ENCODE measurements at regions of chr7 and their contacts with region 1.

Region 1: GRCh38 chr7:30225863-30226613 is 58.4 kb upstream of the ZNRF2 start:
- DNase-seq: peak; percentile 70 to 91
- ATAC-seq: peak; percentile 97
- H3K4me3 ChIP-seq: no peak overlapping the region
- H3K27ac ChIP-seq: peak overlapping the region; percentile 85 to 90 (median 88)
- H3K4me1 ChIP-seq: peaks cover 11 to 21% of the 10 kb centered on the region in 2 donors
- H3K27me3 ChIP-seq: no peaks in the 10 kb centered on the region
- CTCF ChIP-seq: no peak
- POLR2A ChIP-seq: no peak

Region 2: DNA sequence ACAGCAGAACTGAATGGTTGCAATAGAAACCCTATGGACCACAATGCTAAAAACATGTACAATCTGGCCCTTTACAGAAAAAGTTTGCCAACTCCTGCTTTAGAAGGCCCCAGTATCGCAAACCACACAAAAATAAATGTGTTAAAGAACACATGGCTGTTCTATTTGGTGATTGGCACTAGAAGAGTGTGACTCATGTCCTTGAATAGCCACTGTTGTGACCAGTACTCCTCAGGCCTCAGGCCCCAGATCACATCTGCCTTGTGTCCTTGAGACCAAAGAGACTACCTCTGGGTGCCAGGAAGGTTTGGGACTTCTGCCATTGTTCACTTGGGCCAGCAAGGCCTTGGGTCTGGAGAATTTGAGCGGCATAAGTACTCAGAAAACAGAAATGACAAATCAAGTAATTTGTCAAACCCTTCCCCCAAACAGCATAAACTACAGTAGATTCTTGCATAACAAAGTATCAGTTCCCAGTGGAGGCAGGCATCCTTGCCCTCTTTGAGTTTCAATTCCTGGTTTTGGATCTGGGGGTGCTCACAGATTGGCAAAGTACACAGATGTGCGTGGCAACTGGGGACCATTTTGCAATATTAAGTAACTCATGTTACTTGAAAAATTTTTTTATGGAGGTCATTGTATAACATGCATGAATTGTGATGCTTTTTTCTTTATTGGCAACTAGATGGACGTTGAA is 41.1 kb before region 1 on chr7:
- in situ Hi-C with region 1: loop called in 1 of 4 experiments (anchors 5 kb)
- intact Hi-C with region 1: loop called (anchors 2 kb)
- DNase-seq: peak; percentile 82 to 90
- ATAC-seq: peak; percentile 95 to 96
- H3K4me3 ChIP-seq: no peak overlapping the region
- H3K27ac ChIP-seq: peak overlapping the region; percentile 86 to 92 (median 90)
- H3K4me1 ChIP-seq: peaks cover 31 to 47% of the 10 kb centered on the region in 2 donors
- H3K27me3 ChIP-seq: no peaks in the 10 kb centered on the region
- CTCF ChIP-seq: no peak
- POLR2A ChIP-seq: no peak

Region 3: DNA sequence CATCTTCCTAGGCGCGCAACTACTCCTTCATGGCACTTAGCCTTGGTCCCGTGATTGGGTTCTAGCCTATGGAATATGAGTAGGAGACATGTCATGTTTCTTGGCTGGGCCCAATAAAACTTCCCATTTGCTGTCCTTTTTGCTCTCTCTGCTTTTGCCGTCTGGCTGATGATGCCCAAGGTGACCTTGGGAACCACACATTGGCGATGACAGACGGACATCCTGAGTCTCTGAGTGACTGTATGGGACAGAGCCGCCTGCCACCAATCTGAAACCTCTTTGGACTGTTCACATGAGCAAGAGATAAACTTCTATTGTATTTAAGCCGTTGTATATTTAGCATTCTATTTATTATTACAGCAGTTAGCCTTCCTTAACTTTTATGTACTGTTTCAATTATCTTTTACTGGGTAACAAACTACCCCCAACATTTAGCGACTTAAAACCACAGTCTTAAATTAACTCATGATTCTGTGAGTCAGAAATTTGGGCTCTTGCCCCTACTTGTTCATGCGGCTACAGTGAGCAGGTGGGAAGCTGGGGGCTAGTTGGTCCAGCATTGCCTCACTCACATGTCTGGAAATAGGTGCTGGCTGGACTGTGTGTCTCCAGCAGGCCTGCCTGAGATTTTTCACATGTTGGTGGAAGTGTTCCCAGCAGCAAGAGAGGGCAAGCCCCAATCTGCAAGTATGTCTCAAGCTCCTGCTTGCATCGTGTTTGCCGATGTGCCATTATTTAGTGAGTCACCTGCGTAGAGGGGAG is 180.8 kb after region 1 on chr7:
- in situ Hi-C with region 1: no loop called
- intact Hi-C with region 1: loop called (anchors 2 kb)
- DNase-seq: peak; percentile 84 to 94
- ATAC-seq: peak; percentile 96
- H3K4me3 ChIP-seq: peak overlapping the region in 2 of 4 donors; percentile 8 to 9
- H3K27ac ChIP-seq: peak overlapping the region; percentile 83 to 87 (median 84)
- H3K4me1 ChIP-seq: peaks cover 0 to 4% of the 10 kb centered on the region in 2 donors
- H3K27me3 ChIP-seq: no peaks in the 10 kb centered on the region
- CTCF ChIP-seq: no peak
- POLR2A ChIP-seq: no peak

Measured in gastrocnemius medialis (tissue), 4 donors.